Aorta (tissue), 5 donors: ENCODE measurements at regions of chr15 and their contacts with region 1.

Region 1: GRCh38 chr15:25438601-25439368 is at the start of gene UBE3A:
- DNase-seq: peak; percentile 94 to 96
- ATAC-seq: peak; percentile 98
- H3K4me3 ChIP-seq: peak within 1 kb of the TSS; percentile 93 to 94
- H3K27ac ChIP-seq: peak within 1 kb of the TSS; percentile 92 to 95
- H3K4me1 ChIP-seq: peaks cover 1 to 6% of the 10 kb centered on the region in 2 donors
- H3K27me3 ChIP-seq: no peaks in the 10 kb centered on the region
- total RNA-seq, gene UBE3A: 93.5 to 93.6 TPM

Region 2: GRCh38 chr15:25136119-25136518 is 302.7 kb before region 1 on chr15:
- intact Hi-C with region 1: loop called in 1 of 2 experiments (anchors 10 kb)
- DNase-seq: no peak
- ATAC-seq: no peak
- H3K4me3 ChIP-seq: no peak overlapping the region
- H3K27ac ChIP-seq: no peak overlapping the region
- H3K4me1 ChIP-seq: no peaks in the 10 kb centered on the region
- H3K27me3 ChIP-seq: no peaks in the 10 kb centered on the region

Region 3: DNA sequence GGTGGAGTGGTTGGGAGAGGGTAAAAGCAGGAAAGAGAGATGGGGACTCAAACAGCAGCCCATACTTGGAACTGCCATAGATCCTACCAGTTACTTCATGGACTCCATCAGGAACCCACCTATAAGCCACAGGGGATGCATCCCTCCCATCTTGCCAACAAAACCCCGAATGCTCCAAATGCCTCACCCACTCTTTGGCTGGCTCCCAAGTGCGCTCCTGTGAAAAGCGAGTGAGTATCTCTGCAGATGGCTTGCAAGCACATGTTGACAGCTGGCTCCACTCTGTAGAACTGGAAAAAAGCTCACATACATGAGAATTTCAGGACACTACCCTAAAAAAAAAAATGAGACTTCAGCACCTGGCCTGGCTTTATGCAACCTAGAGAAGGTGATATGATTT is 151.0 kb before region 1 on chr15:
- intact Hi-C with region 1: no loop called
- DNase-seq: no peak
- ATAC-seq: no peak
- H3K4me3 ChIP-seq: no peak overlapping the region
- H3K27ac ChIP-seq: no peak overlapping the region
- H3K4me1 ChIP-seq: no peaks in the 10 kb centered on the region
- H3K27me3 ChIP-seq: no peaks in the 10 kb centered on the region

Region 4: DNA sequence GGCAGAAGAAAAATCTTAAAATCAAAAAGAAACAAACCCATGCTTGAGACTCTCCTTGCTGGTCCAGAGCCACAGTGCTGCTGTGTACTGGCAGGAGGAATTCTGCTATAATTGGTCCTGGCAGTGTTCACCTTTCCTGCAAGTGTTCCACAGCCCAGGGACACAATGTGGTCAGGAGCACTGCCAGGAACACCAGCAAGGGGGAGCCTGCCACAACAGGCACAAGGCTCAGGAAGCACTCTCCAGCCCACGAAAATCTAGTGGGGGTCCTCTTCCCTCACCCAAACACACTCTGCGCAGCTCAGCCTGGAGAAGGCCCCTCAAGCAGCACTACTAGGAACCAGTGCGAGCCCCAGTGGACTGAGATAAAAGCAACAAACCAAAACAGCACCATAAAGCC is 92.8 kb before region 1 on chr15:
- intact Hi-C with region 1: loop called in 1 of 2 experiments (anchors 5 kb)
- DNase-seq: peak in 1 of 2 donors; percentile 58
- ATAC-seq: peak; percentile 81
- H3K4me3 ChIP-seq: no peak overlapping the region
- H3K27ac ChIP-seq: no peak overlapping the region
- H3K4me1 ChIP-seq: no peaks in the 10 kb centered on the region
- H3K27me3 ChIP-seq: no peaks in the 10 kb centered on the region

Region 5: GRCh38 chr15:25362545-25362944 is 76.2 kb before region 1 on chr15:
- intact Hi-C with region 1: loop called in 1 of 2 experiments (anchors 5 kb)
- DNase-seq: no peak
- ATAC-seq: no peak
- H3K4me3 ChIP-seq: no peak overlapping the region
- H3K27ac ChIP-seq: peak overlapping the region in 1 of 2 donors; percentile 43
- H3K4me1 ChIP-seq: no peaks in the 10 kb centered on the region
- H3K27me3 ChIP-seq: no peaks in the 10 kb centered on the region

Region 6: DNA sequence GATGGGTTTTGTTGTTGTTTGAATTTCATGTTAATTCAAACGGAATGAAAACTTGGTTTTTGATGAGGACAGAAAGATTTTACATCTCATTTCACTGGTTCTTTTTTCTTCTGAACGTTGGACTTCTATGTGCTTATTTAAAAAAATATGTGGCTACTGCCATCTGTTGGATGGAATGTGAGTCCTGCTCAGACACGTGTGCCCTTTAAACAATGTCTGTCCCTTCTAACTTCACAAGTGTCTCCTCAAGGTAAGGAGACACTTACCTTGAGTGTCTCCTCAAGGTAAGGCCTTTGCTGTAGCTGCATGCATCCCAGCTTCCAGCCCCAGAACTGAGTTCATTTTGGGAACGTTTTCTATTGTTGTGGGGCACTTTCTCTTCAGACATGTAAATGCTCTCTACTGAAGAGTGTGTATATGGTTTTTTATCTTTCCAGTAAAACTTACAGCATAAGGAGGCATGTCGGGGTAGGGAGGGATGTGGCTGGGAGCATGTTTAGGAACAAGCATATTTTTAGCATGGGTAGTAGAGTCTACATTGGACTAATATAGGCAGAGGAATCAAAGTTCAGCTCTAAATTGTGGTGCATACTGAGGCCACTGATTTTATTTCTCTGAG is 63.2 kb after region 1 on chr15:
- intact Hi-C with region 1: loop called in 1 of 2 experiments (anchors 2 kb)
- DNase-seq: no peak
- ATAC-seq: peak; percentile 72
- H3K4me3 ChIP-seq: no peak overlapping the region
- H3K27ac ChIP-seq: no peak overlapping the region
- H3K4me1 ChIP-seq: peaks cover 0 to 3% of the 10 kb centered on the region in 2 donors
- H3K27me3 ChIP-seq: no peaks in the 10 kb centered on the region